T-cell (primary cell): ENCODE measurements at regions of chr6 and their contacts with region 1.

Region 1: DNA sequence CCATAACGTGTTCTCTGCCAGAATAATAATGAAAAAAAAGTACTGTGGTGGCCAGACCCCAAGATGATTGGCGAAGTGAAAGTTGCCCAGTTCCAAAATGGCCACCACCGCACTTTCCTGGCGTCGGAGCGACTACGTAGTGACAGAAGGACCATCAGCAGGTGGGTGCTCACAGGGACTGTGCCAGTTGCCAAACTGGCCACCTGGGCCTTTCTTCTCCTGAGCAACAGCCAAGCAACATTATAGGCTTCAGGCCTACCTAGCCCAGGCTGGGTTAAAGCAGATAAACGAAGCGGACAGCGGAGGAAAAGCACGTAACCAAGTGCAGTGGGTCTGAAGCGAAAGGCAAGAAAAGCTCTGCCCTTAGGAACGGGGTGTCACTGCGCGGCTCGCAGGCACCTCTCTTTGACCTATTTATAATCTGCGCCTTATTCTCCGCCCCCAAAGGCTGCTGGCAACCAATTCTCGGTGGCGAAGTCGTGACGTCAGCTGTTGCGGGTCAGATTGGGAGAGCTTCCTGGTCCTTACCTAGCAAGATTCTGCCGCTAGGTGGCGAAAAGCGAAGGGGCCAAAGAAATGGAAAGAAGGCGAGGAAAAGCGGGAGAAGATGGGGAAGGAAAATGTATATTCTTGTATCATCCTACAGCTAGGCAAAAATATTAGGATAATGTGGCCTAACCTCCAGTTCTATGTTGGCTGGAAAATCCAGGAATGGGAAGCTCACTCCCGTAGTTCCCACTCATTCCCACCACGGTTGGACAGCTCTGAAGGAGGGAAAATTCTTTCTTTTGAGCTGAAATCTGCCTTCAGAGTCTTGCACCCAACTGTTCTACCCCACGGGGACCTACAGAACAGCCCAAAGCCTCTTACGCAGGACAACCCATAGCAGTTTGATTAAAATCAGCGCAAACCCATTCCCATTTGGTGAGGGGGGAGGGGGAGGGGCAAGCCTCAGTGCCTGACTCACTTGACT is 6.9 kb upstream of the MOG start:
- DNase-seq: peak; percentile 92 to 99 (median 98)
- ATAC-seq: peak; percentile 93 to 97 (median 96)
- H3K4me3 ChIP-seq: peak overlapping the region; percentile 81 to 89
- H3K4me3 Mint-ChIP-seq: peak overlapping the region; percentile 83 to 96 (median 93)
- H3K27ac ChIP-seq: peak overlapping the region; percentile 99
- H3K27ac Mint-ChIP-seq: peak overlapping the region; percentile 99 to 100
- H3K4me1 ChIP-seq: peaks cover 6 to 16% of the 10 kb centered on the region in 2 experiments
- H3K4me1 Mint-ChIP-seq: peaks cover 10 to 17% (median 13%) of the 10 kb centered on the region in 3 donors
- H3K27me3 ChIP-seq: peaks cover 0 to 5% of the 10 kb centered on the region in 2 experiments
- H3K27me3 Mint-ChIP-seq: peaks cover 4 to 6% of the 10 kb centered on the region in 2 donors

Region 2: GRCh38 chr6:29632789-29633533 is 17.0 kb before region 1 on chr6 and contains the start of gene GABBR1:
- CTCF ChIA-PET with region 1: interaction called, 4 to 12 read pairs
- POLR2A ChIA-PET with region 1: no interaction called
- DNase-seq: peak; percentile 36 to 78 (median 55)
- ATAC-seq: peak; percentile 80 to 84 (median 82)
- H3K4me3 ChIP-seq: peak within 1 kb of the TSS; percentile 72 to 77
- H3K4me3 Mint-ChIP-seq: peak within 1 kb of the TSS; percentile 80 to 95 (median 89)
- H3K27ac ChIP-seq: peak within 1 kb of the TSS; percentile 52
- H3K27ac Mint-ChIP-seq: peak within 1 kb of the TSS; percentile 76 to 78
- H3K4me1 ChIP-seq: peaks cover 18 to 38% of the 10 kb centered on the region in 2 experiments
- H3K4me1 Mint-ChIP-seq: peaks cover 48 to 57% (median 52%) of the 10 kb centered on the region in 3 donors
- H3K27me3 ChIP-seq: peaks cover 0 to 14% of the 10 kb centered on the region in 2 experiments
- H3K27me3 Mint-ChIP-seq: peaks cover 0 to 2% of the 10 kb centered on the region in 2 donors
- total RNA-seq, gene GABBR1: 48.0 to 82.7 (median 74.8) TPM

Region 3: DNA sequence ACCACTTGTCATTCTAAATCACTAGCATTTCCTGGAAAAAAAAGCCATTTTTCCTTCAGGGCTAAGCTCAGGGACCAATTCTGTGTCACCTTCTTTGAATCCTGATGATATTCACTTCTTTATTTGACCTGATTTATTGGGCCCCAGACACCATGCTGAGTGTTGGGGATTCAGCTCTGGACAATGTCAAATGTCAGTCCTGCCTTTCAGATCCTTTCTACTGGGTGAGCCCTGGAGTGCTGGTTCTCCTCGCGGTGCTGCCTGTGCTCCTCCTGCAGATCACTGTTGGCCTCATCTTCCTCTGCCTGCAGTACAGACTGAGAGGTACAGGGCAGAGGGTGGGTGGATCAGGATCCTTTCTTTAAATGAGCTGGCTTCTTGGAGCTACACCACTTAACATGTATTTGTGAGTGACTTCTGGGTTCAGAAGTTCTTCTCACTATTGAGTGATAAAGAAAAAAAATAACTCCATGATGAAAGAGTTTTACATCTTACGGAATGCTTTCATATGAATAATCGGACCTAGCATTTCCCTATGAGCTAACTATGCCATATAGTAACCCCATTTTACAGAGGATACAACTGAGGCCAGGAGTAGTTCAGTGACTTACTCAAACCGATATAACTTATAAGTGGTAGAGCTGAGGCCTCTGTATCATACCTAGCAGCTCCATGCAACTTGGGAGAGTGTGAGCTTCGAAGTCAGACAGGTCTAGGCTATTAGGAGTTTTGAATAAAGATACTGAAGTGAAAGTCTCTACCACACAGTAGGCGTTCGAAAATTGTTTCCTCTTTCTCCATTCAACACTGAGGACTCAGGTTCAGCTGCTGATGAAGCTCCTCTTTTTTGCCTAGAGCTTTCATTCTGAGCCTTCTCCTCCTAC is 16.2 kb after region 1 on chr6:
- CTCF ChIA-PET with region 1: interaction called, 8 to 25 read pairs
- POLR2A ChIA-PET with region 1: interaction called in 1 of 2 experiments, 3 read pairs
- DNase-seq: no peak
- ATAC-seq: no peak
- H3K4me3 ChIP-seq: no peak overlapping the region
- H3K4me3 Mint-ChIP-seq: no peak overlapping the region
- H3K27ac ChIP-seq: no peak overlapping the region
- H3K27ac Mint-ChIP-seq: no peak overlapping the region
- H3K4me1 ChIP-seq: no peaks in the 10 kb centered on the region
- H3K4me1 Mint-ChIP-seq: no peaks in the 10 kb centered on the region
- H3K27me3 ChIP-seq: peaks cover 2 to 46% of the 10 kb centered on the region in 2 experiments
- H3K27me3 Mint-ChIP-seq: peaks cover 30 to 51% of the 10 kb centered on the region in 2 donors

Region 4: GRCh38 chr6:29708432-29709179 is 58.6 kb after region 1 on chr6:
- CTCF ChIA-PET with region 1: interaction called in 1 of 2 experiments, 12 read pairs
- POLR2A ChIA-PET with region 1: no interaction called
- DNase-seq: peak; percentile 44 to 96 (median 79)
- ATAC-seq: peak; percentile 91 to 95 (median 93)
- H3K4me3 ChIP-seq: peak overlapping the region; percentile 12 to 32
- H3K4me3 Mint-ChIP-seq: peak overlapping the region; percentile 69 to 82 (median 76)
- H3K27ac ChIP-seq: peak overlapping the region; percentile 65
- H3K27ac Mint-ChIP-seq: peak overlapping the region; percentile 89 to 96
- H3K4me1 ChIP-seq: peaks cover 33 to 65% of the 10 kb centered on the region in 2 experiments
- H3K4me1 Mint-ChIP-seq: peaks cover 75 to 85% (median 81%) of the 10 kb centered on the region in 3 donors
- H3K27me3 ChIP-seq: peaks cover 2 to 5% of the 10 kb centered on the region in 2 experiments
- H3K27me3 Mint-ChIP-seq: no peaks in the 10 kb centered on the region

Region 5: DNA sequence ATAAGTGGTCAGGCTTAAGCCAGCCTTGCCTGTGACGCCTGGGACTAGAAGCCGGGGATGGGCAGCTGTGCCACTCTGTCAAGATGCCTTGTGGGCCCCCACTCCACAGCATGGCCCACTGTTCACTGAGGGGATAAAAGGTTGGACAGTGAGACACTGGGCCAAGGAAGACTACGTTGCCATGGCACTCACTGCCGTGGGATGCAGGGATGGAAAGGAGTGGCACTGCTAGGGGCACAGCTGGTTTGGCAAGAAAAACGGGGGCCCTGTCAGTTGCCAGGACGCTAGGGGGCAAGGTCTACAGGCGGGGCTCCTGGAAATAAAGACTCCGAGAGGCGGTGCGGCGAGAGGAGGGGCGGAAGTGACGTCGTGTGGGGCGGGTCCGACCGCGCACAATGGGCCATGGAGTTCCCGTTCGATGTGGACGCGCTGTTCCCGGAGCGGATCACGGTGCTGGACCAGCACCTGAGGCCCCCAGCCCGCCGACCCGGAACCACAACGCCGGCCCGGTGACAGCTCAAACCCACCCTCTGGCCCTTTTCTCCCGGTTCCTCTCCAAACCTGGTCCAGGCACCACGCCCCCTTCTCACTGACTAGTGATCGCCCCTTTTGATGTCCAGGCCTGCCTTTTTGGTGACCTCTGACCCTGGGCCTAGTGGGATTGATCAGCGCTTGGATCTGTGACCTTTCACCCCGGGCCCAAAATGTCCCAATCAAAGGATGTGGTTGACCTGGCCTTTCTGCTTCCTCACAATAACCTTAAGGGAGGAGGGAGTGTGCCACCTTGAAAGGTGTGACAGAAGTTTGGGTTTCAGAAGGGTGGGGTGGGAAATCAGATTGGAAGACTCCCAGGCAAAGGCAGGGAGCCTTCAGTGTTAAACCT is 976.7 kb after region 1 on chr6 and contains the start of gene ATAT1:
- CTCF ChIA-PET with region 1: no interaction called
- POLR2A ChIA-PET with region 1: no interaction called
- DNase-seq: peak; percentile 76 to 95 (median 87)
- ATAC-seq: peak; percentile 99 to 100 (median 99)
- H3K4me3 ChIP-seq: peak within 1 kb of the TSS; percentile 54 to 63
- H3K4me3 Mint-ChIP-seq: peak within 1 kb of the TSS; percentile 84 to 89 (median 87)
- H3K27ac ChIP-seq: peak within 1 kb of the TSS; percentile 81
- H3K27ac Mint-ChIP-seq: peak within 1 kb of the TSS; percentile 94
- H3K4me1 ChIP-seq: peaks cover 7 to 18% of the 10 kb centered on the region in 2 experiments
- H3K4me1 Mint-ChIP-seq: peaks cover 25 to 27% (median 26%) of the 10 kb centered on the region in 3 donors
- H3K27me3 ChIP-seq: no peaks in the 10 kb centered on the region
- H3K27me3 Mint-ChIP-seq: no peaks in the 10 kb centered on the region
- total RNA-seq, gene ATAT1: 6.9 to 11.8 (median 10.4) TPM